ENCODE measurements at regions of chr3 and their contacts with region 1.

Region 1: DNA sequence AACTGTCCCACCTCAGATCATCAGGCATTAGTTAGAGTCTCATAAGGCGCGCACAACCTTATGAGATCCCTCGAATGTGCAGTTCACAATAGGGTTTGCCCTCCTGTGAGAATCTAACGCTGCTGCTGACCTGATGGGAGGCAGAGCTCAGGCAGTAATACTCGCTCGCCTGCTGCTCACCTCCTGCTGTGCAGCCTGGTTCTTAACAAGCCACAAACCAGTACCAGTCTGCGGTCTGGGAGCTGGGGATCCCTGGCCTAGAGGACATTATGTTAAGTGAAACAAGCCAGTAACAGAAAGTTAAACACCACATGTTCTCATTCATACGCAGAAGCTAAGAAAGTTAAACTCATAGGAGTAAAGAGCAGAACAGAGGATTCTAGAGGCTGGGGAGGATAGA is 47.0 kb downstream of the MAP3K13 start:
- DNase-seq: no peak
- ATAC-seq: no peak
- H3K4me3 Mint-ChIP-seq: no peak overlapping the region
- H3K27ac Mint-ChIP-seq: no peak overlapping the region
- H3K4me1 Mint-ChIP-seq: no peaks in the 10 kb centered on the region
- H3K27me3 Mint-ChIP-seq: peaks cover 5% of the 10 kb centered on the region

Region 2: GRCh38 chr3:185371306-185372074 is 38.5 kb before region 1 on chr3:
- CTCF ChIA-PET with region 1: no interaction called
- POLR2A ChIA-PET with region 1: no interaction called
- intact Hi-C with region 1: loop called in 1 of 2 experiments (anchors 1 kb)
- DNase-seq: no peak
- ATAC-seq: no peak
- H3K4me3 Mint-ChIP-seq: no peak overlapping the region
- H3K27ac Mint-ChIP-seq: no peak overlapping the region
- H3K4me1 Mint-ChIP-seq: no peaks in the 10 kb centered on the region
- H3K27me3 Mint-ChIP-seq: peaks cover 16% of the 10 kb centered on the region

Measured in activated CD4-positive, alpha-beta T cell treated with anti-CD3 and anti-CD28 coated beads for 36 hours (primary cell).